ENCODE measurements at regions of chr2 and their contacts with region 1.

Region 1: GRCh38 chr2:11344342-11344955 is at the start of gene ROCK2:
- DNase-seq: peak; percentile 93
- H3K4me3 ChIP-seq: peak within 1 kb of the TSS; percentile 76 to 100 (median 93)
- H3K27ac ChIP-seq: peak within 1 kb of the TSS; percentile 98 to 100 (median 98)
- H3K4me1 ChIP-seq: peaks cover 0 to 41% (median 35%) of the 10 kb centered on the region in 4 donors
- H3K27me3 ChIP-seq: no peaks in the 10 kb centered on the region
- CTCF ChIP-seq: no peak
- EP300 ChIP-seq: no peak
- POLR2A ChIP-seq: no peak
- total RNA-seq, gene ROCK2: 43.5 to 74.8 (median 48.3) TPM

Region 2: GRCh38 chr2:10817413-10817812 is 527.0 kb before region 1 on chr2:
- intact Hi-C with region 1: no loop called
- DNase-seq: peak; percentile 45
- H3K4me3 ChIP-seq: no peak overlapping the region
- H3K27ac ChIP-seq: no peak overlapping the region
- H3K4me1 ChIP-seq: peaks cover 0 to 5% (median 2%) of the 10 kb centered on the region in 4 donors
- H3K27me3 ChIP-seq: no peaks in the 10 kb centered on the region
- CTCF ChIP-seq: no peak
- EP300 ChIP-seq: no peak
- POLR2A ChIP-seq: no peak

Region 3: GRCh38 chr2:11154923-11155380 is 189.5 kb before region 1 on chr2:
- intact Hi-C with region 1: loop called (anchors 5 kb)
- DNase-seq: peak; percentile 99
- H3K4me3 ChIP-seq: peak overlapping the region; percentile 41 to 93 (median 66)
- H3K27ac ChIP-seq: peak overlapping the region; percentile 89 to 96 (median 94)
- H3K4me1 ChIP-seq: peaks cover 0 to 24% (median 19%) of the 10 kb centered on the region in 4 donors
- H3K27me3 ChIP-seq: no peaks in the 10 kb centered on the region
- CTCF ChIP-seq: no peak
- EP300 ChIP-seq: no peak
- POLR2A ChIP-seq: peak in 1 of 2 donors; percentile 46

Region 4: GRCh38 chr2:11254100-11254536 is 90.3 kb before region 1 on chr2:
- intact Hi-C with region 1: loop called (anchors 5 kb)
- DNase-seq: no peak
- H3K4me3 ChIP-seq: no peak overlapping the region
- H3K27ac ChIP-seq: no peak overlapping the region
- H3K4me1 ChIP-seq: peaks cover 0 to 28% (median 13%) of the 10 kb centered on the region in 4 donors
- H3K27me3 ChIP-seq: no peaks in the 10 kb centered on the region
- CTCF ChIP-seq: no peak
- EP300 ChIP-seq: no peak
- POLR2A ChIP-seq: no peak

Region 5: GRCh38 chr2:11314487-11314886 is 30.0 kb before region 1 on chr2:
- intact Hi-C with region 1: no loop called
- DNase-seq: no peak
- H3K4me3 ChIP-seq: no peak overlapping the region
- H3K27ac ChIP-seq: no peak overlapping the region
- H3K4me1 ChIP-seq: peaks cover 0 to 33% (median 18%) of the 10 kb centered on the region in 4 donors
- H3K27me3 ChIP-seq: no peaks in the 10 kb centered on the region
- CTCF ChIP-seq: no peak
- EP300 ChIP-seq: no peak
- POLR2A ChIP-seq: no peak

Region 6: DNA sequence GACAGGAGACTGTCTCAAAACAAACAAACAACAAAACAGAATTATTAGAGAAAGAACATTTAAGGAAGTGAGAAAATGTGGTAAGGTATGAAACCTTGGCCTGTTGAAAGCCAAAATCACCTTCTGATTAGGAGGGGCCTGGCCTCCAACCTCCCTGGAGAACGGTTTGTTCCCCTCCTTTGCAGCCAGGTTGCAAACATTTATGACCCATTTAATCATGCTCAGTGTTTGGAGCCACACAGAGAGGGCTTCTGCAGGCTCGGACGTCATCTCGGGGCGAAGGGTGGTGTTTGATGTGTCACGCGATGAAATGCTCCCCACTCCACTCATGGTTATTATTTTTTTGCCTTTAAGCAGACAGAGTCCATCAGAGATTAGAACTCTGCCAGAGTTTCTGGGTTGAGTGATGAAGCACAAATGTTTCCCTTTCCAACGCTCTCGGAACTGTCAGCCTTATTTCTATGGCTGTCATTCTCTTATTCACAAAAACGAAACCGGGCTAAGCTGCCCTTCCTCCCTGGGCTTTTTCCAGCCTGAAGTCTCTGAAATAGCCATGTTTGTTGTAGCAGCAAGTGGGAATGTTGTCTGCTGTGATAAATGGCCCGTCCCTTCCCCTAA is 33.6 kb after region 1 on chr2:
- intact Hi-C with region 1: loop called (anchors 1 kb)
- DNase-seq: peak; percentile 85
- H3K4me3 ChIP-seq: peak overlapping the region in 2 of 4 donors; percentile 17 to 18
- H3K27ac ChIP-seq: peak overlapping the region; percentile 63 to 92 (median 90)
- H3K4me1 ChIP-seq: peaks cover 2 to 60% (median 47%) of the 10 kb centered on the region in 4 donors
- H3K27me3 ChIP-seq: no peaks in the 10 kb centered on the region
- CTCF ChIP-seq: no peak
- EP300 ChIP-seq: peak; percentile 62 to 89 (median 81)
- POLR2A ChIP-seq: no peak

Region 7: GRCh38 chr2:11411768-11412448 is 67.5 kb after region 1 on chr2:
- intact Hi-C with region 1: loop called (anchors 2 kb)
- DNase-seq: peak; percentile 72
- H3K4me3 ChIP-seq: peak overlapping the region; percentile 2 to 43 (median 38)
- H3K27ac ChIP-seq: peak overlapping the region in 2 of 4 donors; percentile 2 to 3
- H3K4me1 ChIP-seq: peaks cover 0 to 22% (median 14%) of the 10 kb centered on the region in 4 donors
- H3K27me3 ChIP-seq: no peaks in the 10 kb centered on the region
- CTCF ChIP-seq: peak; percentile 72 to 87 (median 76)
- EP300 ChIP-seq: no peak
- POLR2A ChIP-seq: no peak

Region 8: GRCh38 chr2:11430729-11431128 is 86.3 kb after region 1 on chr2:
- intact Hi-C with region 1: no loop called
- DNase-seq: no peak
- H3K4me3 ChIP-seq: no peak overlapping the region
- H3K27ac ChIP-seq: no peak overlapping the region
- H3K4me1 ChIP-seq: no peaks in the 10 kb centered on the region
- H3K27me3 ChIP-seq: no peaks in the 10 kb centered on the region
- CTCF ChIP-seq: no peak
- EP300 ChIP-seq: no peak
- POLR2A ChIP-seq: no peak

Region 9: GRCh38 chr2:11465497-11466406 is 121.3 kb after region 1 on chr2 and contains the start of gene E2F6:
- intact Hi-C with region 1: loop called (anchors 5 kb)
- DNase-seq: peak; percentile 96
- H3K4me3 ChIP-seq: peak within 1 kb of the TSS; percentile 50 to 67 (median 62)
- H3K27ac ChIP-seq: peak within 1 kb of the TSS; percentile 85 to 97 (median 94)
- H3K4me1 ChIP-seq: peaks cover 3 to 51% (median 40%) of the 10 kb centered on the region in 4 donors
- H3K27me3 ChIP-seq: no peaks in the 10 kb centered on the region
- CTCF ChIP-seq: no peak
- EP300 ChIP-seq: peak in 2 of 4 donors; percentile 11 to 27
- POLR2A ChIP-seq: peak; percentile 68 to 77
- total RNA-seq, gene E2F6: 11.8 to 24.2 (median 19.5) TPM

Region 10: GRCh38 chr2:11540153-11540995 is 195.9 kb after region 1 on chr2:
- intact Hi-C with region 1: no loop called
- DNase-seq: no peak
- H3K4me3 ChIP-seq: no peak overlapping the region
- H3K27ac ChIP-seq: peak overlapping the region in 1 of 4 donors; percentile 57
- H3K4me1 ChIP-seq: peaks cover 0 to 17% (median 3%) of the 10 kb centered on the region in 4 donors
- H3K27me3 ChIP-seq: peaks cover 0 to 38% (median 4%) of the 10 kb centered on the region in 3 donors
- CTCF ChIP-seq: no peak
- EP300 ChIP-seq: no peak
- POLR2A ChIP-seq: no peak

Measured in sigmoid colon (tissue), 7 donors.